CD4-positive, alpha-beta T cell (primary cell): ENCODE measurements at regions of chr7 and their contacts with region 1.

Region 1: GRCh38 chr7:22822486-22823141 is at the start of gene TOMM7:
- DNase-seq: peak; percentile 75 to 98 (median 84)
- ATAC-seq: peak; percentile 93
- H3K4me3 ChIP-seq: peak within 1 kb of the TSS; percentile 65
- H3K4me3 Mint-ChIP-seq: peak within 1 kb of the TSS; percentile 98
- H3K27ac ChIP-seq: peak within 1 kb of the TSS; percentile 46 to 66
- H3K27ac Mint-ChIP-seq: peak within 1 kb of the TSS; percentile 92
- H3K4me1 ChIP-seq: peaks cover 28% of the 10 kb centered on the region
- H3K4me1 Mint-ChIP-seq: peaks cover 49% of the 10 kb centered on the region
- H3K27me3 ChIP-seq: no peaks in the 10 kb centered on the region
- H3K27me3 Mint-ChIP-seq: peaks cover 15% of the 10 kb centered on the region
- CTCF ChIP-seq: no peak
- total RNA-seq, gene TOMM7: 503 to 549 TPM

Region 2: GRCh38 chr7:21461282-21461681 is 1361.3 kb before region 1 on chr7:
- CTCF ChIA-PET with region 1: no interaction called
- POLR2A ChIA-PET with region 1: no interaction called
- intact Hi-C with region 1: no loop called
- DNase-seq: peak in 1 of 14 experiments; percentile 14
- ATAC-seq: no peak
- H3K4me3 ChIP-seq: no peak overlapping the region
- H3K4me3 Mint-ChIP-seq: no peak overlapping the region
- H3K27ac ChIP-seq: no peak overlapping the region
- H3K27ac Mint-ChIP-seq: no peak overlapping the region
- H3K4me1 ChIP-seq: peaks cover 12% of the 10 kb centered on the region
- H3K4me1 Mint-ChIP-seq: peaks cover 48% of the 10 kb centered on the region
- H3K27me3 ChIP-seq: no peaks in the 10 kb centered on the region
- H3K27me3 Mint-ChIP-seq: no peaks in the 10 kb centered on the region
- CTCF ChIP-seq: no peak

Region 3: GRCh38 chr7:22854158-22855048 is 31.8 kb after region 1 on chr7:
- CTCF ChIA-PET with region 1: interaction called, 4 read pairs
- POLR2A ChIA-PET with region 1: interaction called, 3 read pairs
- intact Hi-C with region 1: loop called (anchors 2 kb)
- DNase-seq: peak; percentile 30 to 90 (median 68)
- ATAC-seq: peak; percentile 21
- H3K4me3 ChIP-seq: peak overlapping the region; percentile 97
- H3K4me3 Mint-ChIP-seq: peak overlapping the region; percentile 97
- H3K27ac ChIP-seq: peak overlapping the region; percentile 69 to 75
- H3K27ac Mint-ChIP-seq: peak overlapping the region; percentile 92
- H3K4me1 ChIP-seq: peaks cover 21% of the 10 kb centered on the region
- H3K4me1 Mint-ChIP-seq: peaks cover 30% of the 10 kb centered on the region
- H3K27me3 ChIP-seq: no peaks in the 10 kb centered on the region
- H3K27me3 Mint-ChIP-seq: peaks cover 3% of the 10 kb centered on the region
- CTCF ChIP-seq: peak; percentile 71

Region 4: DNA sequence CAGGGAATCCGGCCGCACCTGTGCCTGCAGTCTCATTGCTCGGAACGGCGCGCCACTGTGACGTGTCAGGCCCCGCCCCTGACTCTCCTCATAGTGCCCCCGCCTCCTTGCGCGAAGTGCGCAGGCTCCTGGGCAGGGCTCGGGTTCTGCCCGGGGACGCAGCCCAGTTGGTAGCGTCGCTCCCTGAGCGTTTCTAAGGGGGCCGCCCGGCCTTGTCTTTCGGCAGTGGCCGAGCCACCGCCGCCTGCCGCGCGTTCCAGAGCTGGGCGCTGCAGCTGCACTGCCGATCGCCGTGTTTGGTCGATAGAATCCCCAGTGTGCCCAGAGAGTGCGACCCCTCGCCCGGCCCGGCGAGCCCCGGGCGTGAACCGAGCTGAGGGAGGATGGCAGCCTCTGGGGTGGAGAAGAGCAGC is 283.0 kb after region 1 on chr7 and contains the start of gene KLHL7:
- CTCF ChIA-PET with region 1: no interaction called
- POLR2A ChIA-PET with region 1: interaction called, 5 read pairs
- intact Hi-C with region 1: loop called in 1 of 2 experiments (anchors 2 kb)
- DNase-seq: peak; percentile 89 to 98 (median 96)
- ATAC-seq: peak; percentile 94
- H3K4me3 ChIP-seq: peak within 1 kb of the TSS; percentile 98
- H3K4me3 Mint-ChIP-seq: peak within 1 kb of the TSS; percentile 98
- H3K27ac ChIP-seq: peak within 1 kb of the TSS; percentile 94
- H3K27ac Mint-ChIP-seq: peak within 1 kb of the TSS; percentile 96
- H3K4me1 ChIP-seq: peaks cover 19% of the 10 kb centered on the region
- H3K4me1 Mint-ChIP-seq: peaks cover 52% of the 10 kb centered on the region
- H3K27me3 ChIP-seq: no peaks in the 10 kb centered on the region
- H3K27me3 Mint-ChIP-seq: no peaks in the 10 kb centered on the region
- CTCF ChIP-seq: no peak
- total RNA-seq, gene KLHL7: 14.3 to 19.6 TPM